GM10248 (cell line): ENCODE measurements at regions of chr1 and their contacts with region 1.

Region 1: DNA sequence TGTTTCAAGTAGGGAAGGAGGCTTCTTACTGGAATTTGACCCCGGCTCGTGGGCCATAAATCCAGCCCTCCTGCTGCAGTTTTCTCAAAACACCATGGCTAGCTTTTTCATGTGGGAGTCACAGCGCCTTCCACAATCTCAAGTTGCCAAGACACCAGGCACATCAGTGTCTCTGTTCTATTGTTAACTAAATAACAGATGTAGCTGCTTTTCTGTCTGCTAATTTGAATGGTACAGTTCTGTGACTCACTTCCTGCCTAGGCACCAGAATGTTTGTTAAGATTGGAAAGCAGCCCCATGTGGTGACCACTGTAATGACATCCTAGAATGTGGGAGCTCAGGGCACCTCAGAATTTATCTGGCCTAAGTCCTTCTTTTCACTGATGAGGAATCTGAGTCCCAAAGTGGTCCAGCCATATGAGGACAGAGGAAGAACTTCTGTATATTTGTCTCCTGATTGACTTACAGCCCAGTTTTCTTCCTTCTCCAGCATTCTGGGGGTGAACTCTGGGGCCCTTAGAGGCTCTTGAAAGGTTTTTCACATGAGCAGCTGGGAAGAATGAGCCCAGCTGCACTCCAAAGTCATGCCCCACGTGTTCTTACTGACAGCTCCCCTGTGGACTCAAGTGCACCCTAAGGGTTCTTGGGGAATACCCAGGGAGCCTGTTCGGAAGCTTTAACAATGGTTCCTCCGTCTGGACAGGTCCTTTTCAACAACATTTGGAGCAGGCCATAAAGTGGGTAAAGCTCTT is 27.5 kb downstream of the TRIM45 start:
- DNase-seq: peak; percentile 17
- CTCF ChIP-seq: no peak

Region 2: GRCh38 chr1:117077267-117077666 is 16.8 kb before region 1 on chr1:
- CTCF ChIA-PET with region 1: interaction called, 16 read pairs
- POLR2A ChIA-PET with region 1: no interaction called
- DNase-seq: no peak
- CTCF ChIP-seq: no peak

Region 3: GRCh38 chr1:117121776-117122697 is 28.0 kb after region 1 on chr1:
- CTCF ChIA-PET with region 1: interaction called, 16 read pairs
- POLR2A ChIA-PET with region 1: no interaction called
- DNase-seq: peak; percentile 92
- CTCF ChIP-seq: peak; percentile 58